ENCODE measurements at regions of chr10 and their contacts with region 1.

Region 1: DNA sequence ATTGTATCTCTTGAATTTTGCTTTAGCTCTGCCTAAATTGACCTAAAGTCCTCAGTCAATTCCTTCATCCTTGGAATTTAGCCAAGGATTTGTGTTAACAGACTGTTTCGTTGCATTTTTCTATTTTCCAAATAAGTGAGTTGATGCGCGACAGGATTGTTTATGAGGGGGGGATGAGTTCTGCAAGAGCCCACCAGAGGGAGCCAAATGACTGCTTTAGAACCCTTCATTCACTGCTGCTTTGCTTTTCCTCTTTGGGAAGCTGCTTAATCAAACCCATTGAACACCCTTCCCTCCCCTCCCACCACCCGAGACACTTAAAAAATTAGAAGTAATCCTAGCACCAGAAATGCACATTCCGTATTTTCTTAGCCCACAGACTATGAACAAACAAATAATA is 33.7 kb upstream of the PTF1A start:
- DNase-seq: no peak

Region 2: GRCh38 chr10:22849077-22849805 is 309.1 kb before region 1 on chr10:
- intact Hi-C with region 1: no loop called
- DNase-seq: peak; percentile 85

Region 3: GRCh38 chr10:23270531-23270930 is 112.2 kb after region 1 on chr10:
- intact Hi-C with region 1: no loop called
- DNase-seq: no peak

Region 4: GRCh38 chr10:23293145-23293724 is 134.9 kb after region 1 on chr10:
- intact Hi-C with region 1: loop called (anchors 10 kb)
- DNase-seq: no peak

Measured in cardiac septum (tissue), 1 donor.